ENCODE measurements at regions of chr5 and their contacts with region 1.

Region 1: DNA sequence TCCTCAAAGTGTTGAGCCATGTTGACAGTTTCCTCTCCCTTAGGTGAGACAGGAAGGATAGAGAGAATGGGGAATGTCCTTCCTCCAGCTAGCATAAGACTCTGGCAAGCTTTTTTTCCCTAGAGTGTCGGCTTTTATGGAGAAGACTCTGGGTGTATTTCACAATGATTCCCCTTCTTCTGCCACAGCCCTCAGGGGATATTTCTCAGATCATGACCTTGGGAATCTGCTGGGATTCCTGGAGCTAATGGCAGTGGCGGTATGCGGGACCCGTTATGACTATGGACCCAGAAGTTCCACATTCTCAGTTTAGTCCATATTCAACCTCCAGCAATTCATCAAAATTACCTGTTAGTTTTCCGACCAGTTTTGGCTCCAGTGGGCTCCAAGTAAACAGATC is 23.9 kb downstream of the ZNF354A start:
- DNase-seq: no peak
- ATAC-seq: no peak
- H3K4me3 Mint-ChIP-seq: no peak overlapping the region
- H3K27ac Mint-ChIP-seq: no peak overlapping the region
- H3K4me1 Mint-ChIP-seq: no peaks in the 10 kb centered on the region
- H3K27me3 Mint-ChIP-seq: no peaks in the 10 kb centered on the region
- CTCF ChIP-seq: no peak

Region 2: GRCh38 chr5:178453224-178453623 is 253.4 kb before region 1 on chr5:
- CTCF ChIA-PET with region 1: no interaction called
- POLR2A ChIA-PET with region 1: no interaction called
- intact Hi-C with region 1: no loop called
- DNase-seq: no peak
- ATAC-seq: no peak
- H3K4me3 Mint-ChIP-seq: no peak overlapping the region
- H3K27ac Mint-ChIP-seq: no peak overlapping the region
- H3K4me1 Mint-ChIP-seq: no peaks in the 10 kb centered on the region
- H3K27me3 Mint-ChIP-seq: peaks cover 15% of the 10 kb centered on the region
- CTCF ChIP-seq: no peak

Region 3: GRCh38 chr5:178677429-178677828 is 29.2 kb before region 1 on chr5:
- CTCF ChIA-PET with region 1: no interaction called
- POLR2A ChIA-PET with region 1: no interaction called
- intact Hi-C with region 1: no loop called
- DNase-seq: no peak
- ATAC-seq: no peak
- H3K4me3 Mint-ChIP-seq: no peak overlapping the region
- H3K27ac Mint-ChIP-seq: no peak overlapping the region
- H3K4me1 Mint-ChIP-seq: peaks cover 3% of the 10 kb centered on the region
- H3K27me3 Mint-ChIP-seq: peaks cover 2% of the 10 kb centered on the region
- CTCF ChIP-seq: no peak

Region 4: GRCh38 chr5:178688551-178688950 is 18.0 kb before region 1 on chr5:
- CTCF ChIA-PET with region 1: no interaction called
- POLR2A ChIA-PET with region 1: interaction called, 11 read pairs
- intact Hi-C with region 1: no loop called
- DNase-seq: no peak
- ATAC-seq: no peak
- H3K4me3 Mint-ChIP-seq: no peak overlapping the region
- H3K27ac Mint-ChIP-seq: no peak overlapping the region
- H3K4me1 Mint-ChIP-seq: no peaks in the 10 kb centered on the region
- H3K27me3 Mint-ChIP-seq: peaks cover 3% of the 10 kb centered on the region
- CTCF ChIP-seq: no peak